Panc1 (cell line): ENCODE measurements at regions of chr19 and their contacts with region 1.

Region 1: GRCh38 chr19:41872775-41873647 is 4.1 kb upstream of the CD79A start:
- DNase-seq: peak; percentile 53
- ATAC-seq: peak; percentile 84
- H3K4me3 ChIP-seq: no peak overlapping the region
- H3K27ac ChIP-seq: no peak overlapping the region
- H3K4me1 ChIP-seq: peaks cover 4% of the 10 kb centered on the region
- H3K27me3 ChIP-seq: no peaks in the 10 kb centered on the region
- CTCF ChIP-seq: peak; percentile 84

Region 2: GRCh38 chr19:41734617-41735016 is 138.4 kb before region 1 on chr19:
- CTCF ChIA-PET with region 1: no interaction called
- POLR2A ChIA-PET with region 1: no interaction called
- in situ Hi-C with region 1: no loop called
- intact Hi-C with region 1: no loop called
- DNase-seq: no peak
- ATAC-seq: no peak
- H3K4me3 ChIP-seq: no peak overlapping the region
- H3K27ac ChIP-seq: no peak overlapping the region
- H3K4me1 ChIP-seq: no peaks in the 10 kb centered on the region
- H3K27me3 ChIP-seq: peaks cover 7% of the 10 kb centered on the region; the same call in 1 of the 2 replicates
- CTCF ChIP-seq: no peak

Region 3: DNA sequence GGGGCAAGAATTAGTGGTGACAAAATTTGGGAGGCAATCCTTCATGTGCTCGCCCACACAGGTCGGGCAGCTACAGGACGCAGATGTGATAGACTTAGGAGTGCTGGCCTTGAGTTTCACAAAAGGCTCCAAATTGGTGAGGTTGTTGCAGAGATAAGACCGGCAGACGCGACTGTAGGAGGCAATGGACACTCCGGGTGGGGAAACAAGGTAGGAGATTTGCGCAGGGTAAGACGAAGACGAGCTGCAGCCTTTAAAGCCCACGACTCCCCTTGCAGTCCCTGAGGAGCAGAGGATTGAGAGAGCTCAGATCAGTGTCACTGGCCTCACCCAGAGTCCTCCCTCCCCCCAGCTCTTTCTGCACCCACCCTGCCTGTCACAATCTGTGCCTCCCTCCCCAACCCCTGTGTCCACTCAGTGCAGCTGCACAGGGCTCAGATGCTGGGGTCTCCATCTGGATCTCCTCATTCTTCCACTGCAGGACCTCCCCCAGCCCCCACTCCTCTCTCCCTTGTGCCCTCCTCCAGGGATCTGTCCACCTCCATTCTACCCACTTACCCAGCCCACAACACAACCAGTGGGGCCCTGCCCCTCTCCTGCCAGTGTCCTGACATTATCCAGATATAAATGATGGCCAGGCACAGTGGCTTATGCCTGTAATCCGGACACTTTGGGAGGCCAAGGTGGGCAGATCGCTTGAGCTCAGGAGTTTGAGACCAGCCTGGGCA is 34.9 kb before region 1 on chr19:
- CTCF ChIA-PET with region 1: interaction called, 14 read pairs
- POLR2A ChIA-PET with region 1: no interaction called
- in situ Hi-C with region 1: no loop called
- intact Hi-C with region 1: no loop called
- DNase-seq: no peak
- ATAC-seq: no peak
- H3K4me3 ChIP-seq: no peak overlapping the region
- H3K27ac ChIP-seq: no peak overlapping the region
- H3K4me1 ChIP-seq: no peaks in the 10 kb centered on the region
- H3K27me3 ChIP-seq: no peaks in the 10 kb centered on the region
- CTCF ChIP-seq: no peak

Region 4: DNA sequence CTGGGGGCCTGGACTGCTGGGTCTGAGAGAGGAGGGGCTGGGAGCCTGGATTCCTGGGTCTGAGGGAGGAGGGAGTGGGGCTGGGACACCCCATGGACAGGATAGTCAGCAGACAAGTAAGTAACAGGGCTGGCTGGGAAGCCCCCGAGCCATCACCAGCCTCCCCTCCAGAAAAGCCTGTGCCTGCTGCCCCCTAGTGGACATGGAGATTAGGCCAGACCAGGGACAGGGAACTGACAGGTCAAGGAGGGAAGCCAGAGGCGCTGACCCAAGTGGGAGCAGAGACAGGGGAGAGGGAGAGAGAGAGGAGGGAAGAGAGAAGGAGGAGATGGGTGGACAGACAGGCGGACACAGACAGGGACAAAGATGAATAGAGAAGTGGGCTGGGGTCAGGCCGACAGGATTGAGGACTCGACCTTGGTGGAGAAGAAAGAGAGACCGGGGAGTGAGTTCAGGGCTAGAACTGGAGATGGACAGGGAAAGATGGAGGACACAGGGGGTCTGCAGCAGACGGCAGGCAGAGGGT is 61.9 kb after region 1 on chr19:
- CTCF ChIA-PET with region 1: no interaction called
- POLR2A ChIA-PET with region 1: no interaction called
- in situ Hi-C with region 1: no loop called
- intact Hi-C with region 1: no loop called
- DNase-seq: peak; percentile 30
- ATAC-seq: peak; percentile 84
- H3K4me3 ChIP-seq: no peak overlapping the region
- H3K27ac ChIP-seq: no peak overlapping the region
- H3K4me1 ChIP-seq: no peaks in the 10 kb centered on the region
- H3K27me3 ChIP-seq: no peaks in the 10 kb centered on the region; the same call in 1 of the 2 replicates
- CTCF ChIP-seq: peak; percentile 91

Region 5: DNA sequence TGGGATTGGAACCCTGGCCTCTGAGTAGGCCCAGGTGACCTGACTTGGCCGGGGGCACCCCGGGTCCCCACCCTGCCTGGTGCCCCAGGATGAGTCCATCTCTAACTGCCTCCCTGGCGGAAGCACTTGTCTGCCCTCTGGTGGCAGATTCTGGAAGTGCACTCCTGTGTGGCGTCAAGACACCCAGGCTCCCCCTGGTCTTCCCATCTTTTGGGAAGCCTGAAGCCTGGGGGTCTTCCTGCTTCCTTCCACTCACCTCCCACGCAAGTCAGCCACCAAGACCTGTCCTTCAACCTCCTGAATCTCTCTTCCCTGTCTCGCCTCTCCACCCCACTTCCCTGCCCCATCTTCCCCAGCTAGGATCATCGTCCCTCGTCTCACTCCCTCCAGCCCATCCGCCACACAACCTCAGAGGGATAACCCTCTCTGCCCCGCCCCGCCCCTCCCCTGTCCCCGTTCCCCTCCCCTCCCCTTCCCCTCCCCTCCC is 78.7 kb after region 1 on chr19:
- CTCF ChIA-PET with region 1: no interaction called
- POLR2A ChIA-PET with region 1: interaction called, 11 read pairs
- in situ Hi-C with region 1: no loop called
- intact Hi-C with region 1: loop called (anchors 5 kb)
- DNase-seq: peak; percentile 57
- ATAC-seq: peak; percentile 88
- H3K4me3 ChIP-seq: no peak overlapping the region
- H3K27ac ChIP-seq: no peak overlapping the region
- H3K4me1 ChIP-seq: no peaks in the 10 kb centered on the region
- H3K27me3 ChIP-seq: no peaks in the 10 kb centered on the region
- CTCF ChIP-seq: peak; percentile 93

Region 6: GRCh38 chr19:41959056-41960053 is 86.3 kb after region 1 on chr19 and contains the start of gene RABAC1:
- CTCF ChIA-PET with region 1: no interaction called
- POLR2A ChIA-PET with region 1: no interaction called
- in situ Hi-C with region 1: no loop called
- intact Hi-C with region 1: loop called (anchors 5 kb)
- DNase-seq: peak; percentile 45
- ATAC-seq: peak; percentile 90
- H3K4me3 ChIP-seq: peak within 1 kb of the TSS; percentile 66 to 73
- H3K27ac ChIP-seq: peak within 1 kb of the TSS; percentile 65
- H3K4me1 ChIP-seq: peaks cover 7% of the 10 kb centered on the region
- H3K27me3 ChIP-seq: no peaks in the 10 kb centered on the region
- CTCF ChIP-seq: no peak
- total RNA-seq, gene RABAC1: 69.1 TPM